ENCODE measurements at regions of chrX and their contacts with region 1.

Region 1: GRCh38 chrX:107627838-107628661 is at the start of gene PRPS1:
- DNase-seq: peak; percentile 95
- H3K4me3 ChIP-seq: peak within 1 kb of the TSS; percentile 91
- H3K27ac ChIP-seq: peak within 1 kb of the TSS; percentile 79
- H3K4me1 ChIP-seq: peaks cover 21% of the 10 kb centered on the region
- CTCF ChIP-seq: no peak
- total RNA-seq, gene PRPS1: 57.1 and 74.0 TPM in 2 replicates

Region 2: GRCh38 chrX:106999002-106999975 is 628.8 kb before region 1 on chrX:
- CTCF ChIA-PET with region 1: no interaction called
- POLR2A ChIA-PET with region 1: no interaction called
- intact Hi-C with region 1: loop called (anchors 5 kb)
- DNase-seq: peak; percentile 67
- H3K4me3 ChIP-seq: peak overlapping the region; percentile 78
- H3K27ac ChIP-seq: peak overlapping the region; percentile 33
- H3K4me1 ChIP-seq: peaks cover 9% of the 10 kb centered on the region
- CTCF ChIP-seq: peak; percentile 75

Region 3: DNA sequence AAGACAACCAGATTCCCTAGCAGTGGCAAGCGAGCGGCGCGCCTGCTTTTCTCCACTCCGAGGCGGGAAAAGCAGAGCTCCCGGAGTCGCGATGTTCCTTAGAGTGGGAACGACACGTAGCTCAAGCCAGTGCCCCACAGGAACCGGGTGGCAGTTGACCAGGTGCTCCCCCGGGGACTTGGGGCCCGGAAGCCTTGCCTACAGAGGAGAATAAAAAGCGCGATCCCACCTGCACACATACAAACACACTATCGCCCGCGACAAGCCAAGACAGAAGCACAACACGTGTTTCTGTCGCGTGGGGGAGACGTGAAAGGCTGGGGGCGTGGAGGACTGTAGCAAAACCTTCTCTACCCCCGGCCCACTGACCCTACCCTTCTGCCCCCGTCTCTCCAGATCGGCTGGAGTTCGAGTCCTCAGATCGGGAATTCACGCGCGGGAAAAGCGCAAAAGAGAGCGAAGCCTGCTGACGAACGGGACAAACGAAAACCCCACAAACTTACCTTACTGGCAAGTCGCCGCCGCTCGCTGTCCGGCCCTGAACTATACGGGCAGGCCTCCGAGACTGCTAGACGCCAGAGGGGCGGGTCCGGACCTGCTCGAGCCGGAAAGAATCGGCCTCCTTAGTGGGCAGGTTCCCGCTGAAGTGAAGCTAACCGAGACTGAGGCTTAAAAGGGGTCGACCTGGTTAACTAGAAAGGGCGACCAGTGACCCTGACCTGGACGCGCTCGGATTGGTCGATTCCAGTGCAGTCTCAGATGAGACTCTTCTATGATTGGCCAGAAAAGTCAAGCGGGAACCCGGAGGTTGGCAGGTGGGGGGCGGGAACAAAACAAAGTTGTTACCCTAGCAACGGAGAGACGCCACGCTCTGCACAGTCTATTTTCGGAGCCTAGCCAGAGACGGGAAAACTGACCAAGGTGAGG is 422.0 kb before region 1 on chrX and contains the starts of genes DNAAF6 and NUP62CL:
- CTCF ChIA-PET with region 1: no interaction called
- POLR2A ChIA-PET with region 1: interaction called, 3 read pairs
- intact Hi-C with region 1: loop called (anchors 10 kb)
- DNase-seq: peak; percentile 86
- H3K4me3 ChIP-seq: peak within 1 kb of the TSS; percentile 86
- H3K27ac ChIP-seq: peak within 1 kb of the TSS; percentile 62
- H3K4me1 ChIP-seq: no peaks in the 10 kb centered on the region
- CTCF ChIP-seq: no peak
- total RNA-seq, gene DNAAF6: not detected in 2 replicates
- total RNA-seq, gene NUP62CL: 23.4 and 37.6 TPM in 2 replicates

Region 4: DNA sequence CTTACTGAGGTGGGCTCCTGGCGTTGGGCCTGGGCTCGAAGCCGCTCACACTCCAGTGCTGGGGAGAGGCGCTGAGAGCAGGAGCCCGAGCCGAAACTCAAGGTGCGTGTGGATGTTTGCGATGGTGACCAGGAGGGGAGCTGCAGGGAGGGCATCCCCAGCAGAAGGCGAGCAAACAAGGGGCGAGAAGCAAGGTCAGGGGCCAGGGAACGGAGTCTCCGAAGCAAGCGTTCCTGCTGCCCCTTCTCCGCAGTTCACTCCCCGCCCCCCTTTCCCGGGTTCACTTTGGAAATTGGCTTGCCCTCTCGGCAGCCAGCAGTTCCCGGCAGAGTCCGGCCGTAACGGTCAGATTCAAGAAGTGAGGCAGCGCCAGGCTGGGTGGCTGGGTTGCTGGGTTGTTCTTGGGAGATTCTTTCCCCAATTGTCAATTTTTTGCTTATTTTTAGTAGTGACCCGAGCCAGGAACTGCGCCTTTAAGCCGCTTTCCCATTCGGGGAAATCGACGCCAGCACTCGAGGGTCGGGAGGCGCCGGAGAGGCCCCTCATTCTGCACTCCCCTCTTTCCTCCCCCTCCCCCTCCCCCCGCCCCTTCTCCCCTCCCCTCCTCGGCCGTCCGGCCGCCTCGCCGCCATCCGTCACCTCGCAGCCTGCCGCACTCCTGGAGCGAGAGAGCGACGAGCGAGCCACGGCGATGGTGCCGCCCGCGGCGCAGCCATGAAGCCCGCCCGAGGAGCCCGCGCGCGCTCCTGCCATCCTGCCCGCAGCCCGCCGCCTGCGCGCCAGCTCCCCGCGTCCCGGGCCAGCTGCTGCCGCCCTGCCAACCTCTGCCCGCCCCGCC is 178.8 kb before region 1 on chrX and contains the start of gene FRMPD3:
- CTCF ChIA-PET with region 1: no interaction called
- POLR2A ChIA-PET with region 1: interaction called, 5 read pairs
- intact Hi-C with region 1: loop called (anchors 2 kb)
- DNase-seq: peak; percentile 70
- H3K4me3 ChIP-seq: peak within 1 kb of the TSS; percentile 73
- H3K27ac ChIP-seq: peak within 1 kb of the TSS; percentile 86
- H3K4me1 ChIP-seq: peaks cover 71% of the 10 kb centered on the region
- CTCF ChIP-seq: no peak; the same call in 1 of the 2 replicates
- total RNA-seq, gene FRMPD3: 5.8 and 6.5 TPM in 2 replicates

Region 5: GRCh38 chrX:107465932-107466620 is 162.0 kb before region 1 on chrX:
- CTCF ChIA-PET with region 1: no interaction called
- POLR2A ChIA-PET with region 1: interaction called, 10 read pairs
- intact Hi-C with region 1: no loop called
- DNase-seq: peak; percentile 82
- H3K4me3 ChIP-seq: peak overlapping the region; percentile 61
- H3K27ac ChIP-seq: peak overlapping the region; percentile 98
- H3K4me1 ChIP-seq: peaks cover 92% of the 10 kb centered on the region
- CTCF ChIP-seq: no peak

Region 6: GRCh38 chrX:107484002-107484726 is 143.9 kb before region 1 on chrX:
- CTCF ChIA-PET with region 1: no interaction called
- POLR2A ChIA-PET with region 1: no interaction called
- intact Hi-C with region 1: no loop called
- DNase-seq: no peak
- H3K4me3 ChIP-seq: no peak overlapping the region
- H3K27ac ChIP-seq: no peak overlapping the region
- H3K4me1 ChIP-seq: peaks cover 31% of the 10 kb centered on the region
- CTCF ChIP-seq: no peak

Region 7: GRCh38 chrX:107716816-107717700 is 89.0 kb after region 1 on chrX:
- CTCF ChIA-PET with region 1: no interaction called
- POLR2A ChIA-PET with region 1: interaction called, 5 read pairs
- intact Hi-C with region 1: loop called (anchors 2 kb)
- DNase-seq: peak; percentile 87
- H3K4me3 ChIP-seq: peak overlapping the region; percentile 91
- H3K27ac ChIP-seq: peak overlapping the region; percentile 85
- H3K4me1 ChIP-seq: peaks cover 59% of the 10 kb centered on the region
- CTCF ChIP-seq: no peak

Measured in OCI-LY7 (cell line).